Activated naive CD4-positive, alpha-beta T cell treated with anti-CD3 and anti-CD28 coated beads for 36 hours (primary cell): ENCODE measurements at regions of chr1 and their contacts with region 1.

Region 1: GRCh38 chr1:166432655-166433054 is 265.9 kb upstream of the FAM78B start:
- DNase-seq: no peak
- H3K4me3 Mint-ChIP-seq: no peak overlapping the region
- H3K27ac Mint-ChIP-seq: no peak overlapping the region
- H3K4me1 Mint-ChIP-seq: no peaks in the 10 kb centered on the region
- H3K27me3 Mint-ChIP-seq: no peaks in the 10 kb centered on the region

Region 2: DNA sequence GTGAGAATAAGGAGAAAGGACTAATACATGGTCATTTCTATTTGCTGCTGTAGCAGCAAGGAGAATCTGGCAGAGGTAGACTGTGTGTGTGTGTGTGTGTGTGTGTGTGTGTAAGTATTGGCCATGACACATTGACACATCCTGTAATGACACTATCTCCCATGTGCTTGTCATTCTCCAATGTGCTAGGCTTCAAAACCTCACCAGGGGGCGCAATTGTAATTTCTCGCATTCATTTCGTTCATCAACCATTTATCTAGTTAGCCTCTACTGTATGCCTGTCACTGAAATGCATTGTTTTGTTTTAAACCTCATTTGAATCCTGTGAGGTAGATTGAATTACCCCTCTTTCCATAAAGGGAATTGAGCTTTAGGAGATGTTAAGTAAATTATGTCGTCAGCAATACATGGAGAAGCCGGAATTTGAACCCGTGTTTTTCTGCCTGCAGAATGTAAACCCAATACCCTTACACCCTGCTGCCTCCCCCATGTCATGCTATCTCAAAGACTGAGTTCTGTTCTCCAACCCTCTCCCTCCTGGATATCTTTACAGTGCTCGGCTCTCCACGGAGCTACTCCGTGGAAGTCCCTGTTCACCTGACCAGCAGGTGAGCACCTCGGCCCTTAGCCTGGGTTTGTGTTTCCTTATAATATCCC is 504.5 kb before region 1 on chr1:
- CTCF ChIA-PET with region 1: interaction called, 3 read pairs
- intact Hi-C with region 1: loop called (anchors 1 kb)
- DNase-seq: peak; percentile 75
- H3K4me3 Mint-ChIP-seq: no peak overlapping the region
- H3K27ac Mint-ChIP-seq: no peak overlapping the region
- H3K4me1 Mint-ChIP-seq: peaks cover 2% of the 10 kb centered on the region
- H3K27me3 Mint-ChIP-seq: peaks cover 23% of the 10 kb centered on the region

Region 3: GRCh38 chr1:166133276-166133841 is 299.3 kb before region 1 on chr1:
- CTCF ChIA-PET with region 1: no interaction called
- intact Hi-C with region 1: loop called (anchors 5 kb)
- DNase-seq: peak; percentile 40
- H3K4me3 Mint-ChIP-seq: no peak overlapping the region
- H3K27ac Mint-ChIP-seq: no peak overlapping the region
- H3K4me1 Mint-ChIP-seq: no peaks in the 10 kb centered on the region
- H3K27me3 Mint-ChIP-seq: peaks cover 16% of the 10 kb centered on the region